ENCODE measurements at regions of chr16 and their contacts with region 1.

Region 1: DNA sequence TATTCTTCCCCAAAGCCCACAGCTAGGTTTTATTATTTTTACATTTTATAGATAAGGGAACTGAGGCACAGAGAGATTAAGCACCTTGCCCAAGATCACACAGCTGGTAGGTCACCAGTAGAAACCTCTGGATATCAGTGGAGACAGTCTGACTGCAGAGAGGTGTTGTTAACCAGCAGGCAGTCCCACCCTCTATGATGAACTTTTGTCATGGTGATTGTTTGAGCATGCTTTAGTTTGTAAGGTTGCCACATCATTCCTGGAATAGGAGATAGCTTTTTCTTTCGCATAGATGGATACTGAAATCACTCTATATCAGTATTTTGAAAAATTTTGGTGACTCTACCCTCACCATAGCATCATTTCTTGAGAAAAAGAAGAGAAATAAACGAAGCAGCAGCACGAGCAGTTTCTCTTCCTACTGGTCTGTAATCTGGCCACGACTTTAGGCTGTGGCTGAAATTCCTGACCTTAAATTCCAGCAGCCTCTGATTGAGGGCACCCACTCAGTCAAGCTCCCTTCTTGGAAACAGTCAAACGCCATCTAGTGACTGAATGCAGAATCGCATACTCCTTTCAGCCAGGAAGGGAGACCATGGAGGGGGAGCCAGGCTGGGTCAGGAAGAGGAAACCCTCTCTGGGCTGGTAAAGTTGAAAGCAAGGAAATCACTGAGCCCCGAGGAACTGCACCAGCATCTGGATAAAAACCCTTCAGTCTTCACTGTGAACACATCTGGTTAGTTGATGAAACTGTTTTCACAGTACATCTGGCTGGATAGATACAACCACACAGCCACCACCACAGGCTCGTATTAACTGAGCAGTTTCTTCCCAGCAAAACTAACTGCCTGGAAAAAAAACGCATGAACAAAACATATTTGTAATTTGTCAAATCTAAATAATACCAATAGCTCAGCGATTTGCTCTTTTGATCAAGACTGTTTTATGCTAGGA is 108.4 kb upstream of the XYLT1 start:
- DNase-seq: peak; percentile 35 to 63 (median 41)
- H3K4me3 ChIP-seq: no peak overlapping the region
- H3K27ac ChIP-seq: no peak overlapping the region
- H3K4me1 ChIP-seq: no peaks in the 10 kb centered on the region
- H3K27me3 ChIP-seq: no peaks in the 10 kb centered on the region
- CTCF ChIP-seq: peak; percentile 23 to 59 (median 45)
- EP300 ChIP-seq: no peak
- POLR2A ChIP-seq: no peak

Region 2: DNA sequence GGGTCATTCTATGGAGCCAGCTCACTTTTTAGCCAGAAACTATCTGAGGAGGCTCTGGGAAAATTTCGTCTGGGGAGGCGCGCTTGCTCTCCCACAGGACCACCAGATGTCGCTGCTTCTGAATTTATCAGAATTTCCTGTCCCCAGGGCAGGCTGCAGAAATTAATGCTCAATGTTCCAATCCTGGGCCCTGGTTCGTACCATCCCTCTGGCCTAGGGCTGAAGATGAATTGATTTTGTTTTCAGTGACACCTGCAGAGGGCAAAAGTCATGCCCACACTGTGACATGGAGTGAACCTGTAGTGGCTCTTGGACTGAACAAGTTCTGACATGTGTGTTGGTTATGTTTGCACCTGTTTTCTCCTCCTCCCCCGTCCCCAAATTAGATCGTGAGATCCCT is 717.7 kb before region 1 on chr16:
- intact Hi-C with region 1: loop called in 1 of 4 experiments (anchors 10 kb)
- DNase-seq: peak; percentile 10 to 37 (median 26)
- H3K4me3 ChIP-seq: no peak overlapping the region
- H3K27ac ChIP-seq: no peak overlapping the region
- H3K4me1 ChIP-seq: no peaks in the 10 kb centered on the region
- H3K27me3 ChIP-seq: no peaks in the 10 kb centered on the region
- CTCF ChIP-seq: no peak
- EP300 ChIP-seq: no peak
- POLR2A ChIP-seq: no peak

Measured in ovary (tissue), 10 donors.